ENCODE measurements at regions of chr2 and their contacts with region 1.

Region 1: DNA sequence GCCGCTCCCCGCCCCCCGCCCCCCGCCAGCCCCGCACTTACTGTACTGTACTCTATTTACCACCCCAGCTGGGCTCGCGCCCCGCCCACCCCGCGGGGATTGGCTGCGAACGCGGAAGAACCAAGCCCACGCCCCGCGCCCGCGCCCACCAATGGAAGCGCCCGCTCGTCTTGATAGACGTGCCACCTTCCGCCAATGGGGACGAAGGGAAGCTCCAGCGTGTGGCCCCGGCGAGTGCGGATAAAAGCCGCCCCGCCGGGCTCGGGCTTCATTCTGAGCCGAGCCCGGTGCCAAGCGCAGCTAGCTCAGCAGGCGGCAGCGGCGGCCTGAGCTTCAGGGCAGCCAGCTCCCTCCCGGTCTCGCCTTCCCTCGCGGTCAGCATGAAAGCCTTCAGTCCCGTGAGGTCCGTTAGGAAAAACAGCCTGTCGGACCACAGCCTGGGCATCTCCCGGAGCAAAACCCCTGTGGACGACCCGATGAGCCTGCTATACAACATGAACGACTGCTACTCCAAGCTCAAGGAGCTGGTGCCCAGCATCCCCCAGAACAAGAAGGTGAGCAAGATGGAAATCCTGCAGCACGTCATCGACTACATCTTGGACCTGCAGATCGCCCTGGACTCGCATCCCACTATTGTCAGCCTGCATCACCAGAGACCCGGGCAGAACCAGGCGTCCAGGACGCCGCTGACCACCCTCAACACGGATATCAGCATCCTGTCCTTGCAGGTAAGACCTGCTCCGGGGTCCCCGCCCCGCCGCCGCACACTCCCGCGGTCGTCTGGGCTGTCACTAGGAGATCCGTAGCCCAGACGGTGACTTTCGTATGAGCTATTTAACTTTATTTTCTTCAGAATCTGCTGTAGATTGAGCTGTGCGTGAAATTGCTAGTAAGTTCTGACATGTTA is at the start of gene ID2:
- DNase-seq: peak; percentile 88
- ATAC-seq: peak; percentile 64
- H3K4me3 ChIP-seq: peak within 1 kb of the TSS; percentile 80
- H3K27ac ChIP-seq: peak within 1 kb of the TSS; percentile 71
- H3K4me1 ChIP-seq: peaks cover 23% of the 10 kb centered on the region
- H3K27me3 ChIP-seq: peaks cover 0 to 8% of the 10 kb centered on the region in 2 experiments; a peak in 1 of 4 replicates
- CTCF ChIP-seq: no peak
- EP300 ChIP-seq: no peak
- POLR2A ChIP-seq: peak; percentile 99
- RAD21 ChIP-seq: no peak
- polyA plus RNA-seq, gene ID2: 77.3 to 82.5 TPM

Region 2: GRCh38 chr2:7427293-7428060 is 1254.6 kb before region 1 on chr2:
- CTCF ChIA-PET with region 1: interaction called, 7 read pairs
- POLR2A ChIA-PET with region 1: interaction called, 3 read pairs
- RAD21 ChIA-PET with region 1: interaction called, 24 read pairs
- SMC1A ChIA-PET with region 1: interaction called, 12 read pairs
- in situ Hi-C with region 1: loop called (anchors 5 kb)
- intact Hi-C with region 1: loop called (anchors 2 kb)
- DNase-seq: peak; percentile 66
- ATAC-seq: no peak; the same call in 2 of the 3 replicates
- H3K4me3 ChIP-seq: no peak overlapping the region
- H3K27ac ChIP-seq: no peak overlapping the region
- H3K4me1 ChIP-seq: peaks cover 7% of the 10 kb centered on the region; the same call in 1 of the 2 replicates
- H3K27me3 ChIP-seq: peaks cover 0 to 25% of the 10 kb centered on the region in 2 experiments; a peak in 3 of 4 replicates
- CTCF ChIP-seq: peak; percentile 44 to 70 (median 70); a peak in 5 of 6 replicates
- EP300 ChIP-seq: no peak
- POLR2A ChIP-seq: no peak
- RAD21 ChIP-seq: peak; percentile 88

Region 3: DNA sequence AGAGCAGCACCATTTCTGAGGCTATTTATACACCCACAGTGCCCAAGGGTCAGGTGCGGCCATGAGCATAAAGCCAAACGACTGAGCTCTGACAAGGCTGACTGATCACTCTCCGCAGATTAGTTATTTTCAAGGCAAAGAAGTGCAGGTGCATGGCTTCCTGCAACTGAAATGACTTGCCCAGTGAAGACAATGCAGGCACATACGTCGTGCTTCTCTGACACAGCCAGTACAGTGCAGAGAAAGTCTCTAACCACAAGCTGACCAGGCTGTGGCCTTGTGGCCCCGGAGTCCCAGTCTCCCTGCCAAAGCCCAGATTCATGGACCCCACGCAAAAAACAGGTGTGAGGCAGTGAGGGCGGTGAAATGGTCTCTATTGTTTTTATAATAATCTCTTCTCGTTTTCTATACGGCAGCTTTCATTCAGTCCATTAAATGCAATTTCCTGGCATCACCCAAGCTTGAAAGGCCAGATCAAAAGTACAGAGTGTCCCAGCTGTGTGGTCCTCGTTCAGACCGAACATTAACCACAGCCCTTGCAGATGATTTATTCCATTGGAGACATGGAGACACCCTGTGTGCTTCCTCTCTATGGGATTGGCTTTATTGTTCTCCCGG is 447.2 kb before region 1 on chr2:
- CTCF ChIA-PET with region 1: no interaction called
- POLR2A ChIA-PET with region 1: no interaction called
- RAD21 ChIA-PET with region 1: interaction called, 3 read pairs
- SMC1A ChIA-PET with region 1: interaction called, 3 read pairs
- in situ Hi-C with region 1: loop called (anchors 10 kb)
- intact Hi-C with region 1: loop called (anchors 10 kb)
- DNase-seq: peak; percentile 90
- ATAC-seq: peak; percentile 88
- H3K4me3 ChIP-seq: peak overlapping the region; percentile 26; the same call in 1 of the 2 replicates
- H3K27ac ChIP-seq: peak overlapping the region; percentile 41
- H3K4me1 ChIP-seq: peaks cover 39% of the 10 kb centered on the region
- H3K27me3 ChIP-seq: no peaks in the 10 kb centered on the region
- CTCF ChIP-seq: no peak
- EP300 ChIP-seq: peak; percentile 78 to 84
- POLR2A ChIP-seq: no peak
- RAD21 ChIP-seq: no peak

Region 4: DNA sequence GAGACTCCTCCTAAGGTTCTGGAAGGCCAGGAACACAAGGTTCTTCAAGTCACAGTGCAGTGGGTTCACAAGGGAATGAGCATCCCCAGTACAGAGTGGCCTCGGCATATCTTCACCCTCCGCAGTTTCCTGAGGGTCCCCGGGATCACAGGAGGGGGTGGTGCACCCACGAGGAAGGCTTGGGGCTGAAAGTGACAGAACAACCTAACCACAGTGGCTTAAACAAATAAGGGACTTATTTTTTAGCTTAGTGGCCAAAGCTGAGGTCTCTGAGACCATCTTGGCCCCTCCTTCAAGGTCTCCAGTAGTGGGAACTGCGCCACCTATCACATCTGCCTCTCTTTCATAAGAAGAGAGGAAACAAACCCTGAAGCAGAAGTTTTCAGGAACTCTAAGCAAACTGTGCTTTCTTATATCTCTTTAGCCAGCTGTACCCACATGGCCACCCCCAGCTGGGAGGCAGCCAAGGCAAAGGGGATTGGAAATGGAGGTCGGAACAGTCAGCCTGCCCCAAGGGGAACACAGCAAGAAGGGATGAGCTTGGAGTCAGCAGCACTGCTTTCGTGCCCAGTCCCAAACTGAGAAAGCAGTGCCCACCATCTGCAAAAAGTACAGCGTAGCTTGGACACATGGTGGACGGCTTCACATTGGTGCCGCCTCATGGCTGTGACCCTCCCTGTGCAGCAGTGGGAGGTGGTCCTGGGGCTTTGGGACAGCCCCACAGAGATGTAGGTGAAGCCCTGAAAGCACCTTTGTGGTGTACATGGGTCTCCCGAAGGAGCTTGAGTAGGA is 260.2 kb before region 1 on chr2:
- CTCF ChIA-PET with region 1: interaction called, 3 read pairs
- POLR2A ChIA-PET with region 1: interaction called, 6 read pairs
- RAD21 ChIA-PET with region 1: interaction called, 18 read pairs
- SMC1A ChIA-PET with region 1: interaction called, 5 read pairs
- in situ Hi-C with region 1: loop called (anchors 10 kb)
- intact Hi-C with region 1: loop called (anchors 2 kb)
- DNase-seq: peak; percentile 71
- ATAC-seq: peak; percentile 85
- H3K4me3 ChIP-seq: no peak overlapping the region
- H3K27ac ChIP-seq: peak overlapping the region; percentile 46
- H3K4me1 ChIP-seq: peaks cover 16% of the 10 kb centered on the region
- H3K27me3 ChIP-seq: no peaks in the 10 kb centered on the region
- CTCF ChIP-seq: peak; percentile 26 to 44 (median 29); a peak in 5 of 6 replicates
- EP300 ChIP-seq: peak; percentile 56 to 80; a peak in 3 of 4 replicates
- POLR2A ChIP-seq: no peak
- RAD21 ChIP-seq: peak; percentile 49

Region 5: GRCh38 chr2:8452979-8453903 is 228.8 kb before region 1 on chr2:
- CTCF ChIA-PET with region 1: no interaction called
- POLR2A ChIA-PET with region 1: no interaction called
- RAD21 ChIA-PET with region 1: no interaction called
- SMC1A ChIA-PET with region 1: no interaction called
- in situ Hi-C with region 1: no loop called
- intact Hi-C with region 1: no loop called
- DNase-seq: no peak
- ATAC-seq: no peak
- H3K4me3 ChIP-seq: no peak overlapping the region
- H3K27ac ChIP-seq: no peak overlapping the region
- H3K4me1 ChIP-seq: peaks cover 6% of the 10 kb centered on the region
- H3K27me3 ChIP-seq: peaks cover 0 to 2% of the 10 kb centered on the region in 2 experiments; a peak in 1 of 4 replicates
- CTCF ChIP-seq: no peak
- EP300 ChIP-seq: no peak
- POLR2A ChIP-seq: no peak
- RAD21 ChIP-seq: no peak

Region 6: DNA sequence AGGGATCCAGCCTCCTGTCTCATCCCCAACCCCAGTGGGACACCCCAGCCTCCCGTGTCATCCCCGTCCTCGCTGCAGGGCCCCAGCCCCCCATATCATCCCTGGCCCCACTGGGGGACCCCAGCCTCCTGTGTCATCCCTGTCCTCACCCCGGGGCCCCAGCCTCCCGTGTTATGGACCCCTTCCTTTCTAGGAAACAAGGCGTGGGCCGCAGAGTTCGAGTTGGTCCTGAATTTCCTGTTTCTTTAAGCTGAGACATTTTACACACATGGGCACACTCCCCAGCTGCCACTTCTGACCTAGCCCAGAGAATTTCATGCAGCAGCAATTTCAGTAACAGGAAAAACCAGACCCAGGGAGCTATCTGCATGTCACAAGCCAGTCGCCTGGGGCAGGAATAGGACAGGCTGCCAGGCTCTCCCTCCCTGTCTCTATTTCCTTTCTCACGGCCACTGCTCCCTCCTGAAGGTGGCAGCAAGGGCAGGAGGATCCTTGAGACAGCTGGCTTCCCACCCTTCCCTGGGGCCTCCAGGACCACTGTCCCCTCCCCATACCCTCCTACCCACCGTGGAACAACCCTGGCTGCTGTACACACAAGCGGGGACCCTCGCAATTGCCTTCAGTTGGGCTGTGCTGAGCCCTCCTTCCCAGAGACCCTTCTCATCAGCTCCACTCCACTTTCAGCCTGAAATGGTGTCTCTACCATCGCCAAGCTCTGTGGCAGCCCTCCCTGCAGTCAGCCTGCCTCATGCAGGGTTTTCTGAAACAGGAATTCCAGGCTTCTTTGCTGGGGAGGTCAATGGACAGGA is 142.1 kb before region 1 on chr2:
- CTCF ChIA-PET with region 1: interaction called, 22 read pairs
- POLR2A ChIA-PET with region 1: interaction called, 42 read pairs
- RAD21 ChIA-PET with region 1: interaction called, 103 read pairs
- SMC1A ChIA-PET with region 1: interaction called, 15 read pairs
- in situ Hi-C with region 1: no loop called
- intact Hi-C with region 1: loop called (anchors 1 kb)
- DNase-seq: no peak
- ATAC-seq: no peak
- H3K4me3 ChIP-seq: no peak overlapping the region
- H3K27ac ChIP-seq: no peak overlapping the region
- H3K4me1 ChIP-seq: peaks cover 58% of the 10 kb centered on the region
- H3K27me3 ChIP-seq: no peaks in the 10 kb centered on the region
- CTCF ChIP-seq: no peak
- EP300 ChIP-seq: no peak
- POLR2A ChIP-seq: no peak
- RAD21 ChIP-seq: no peak

Region 7: DNA sequence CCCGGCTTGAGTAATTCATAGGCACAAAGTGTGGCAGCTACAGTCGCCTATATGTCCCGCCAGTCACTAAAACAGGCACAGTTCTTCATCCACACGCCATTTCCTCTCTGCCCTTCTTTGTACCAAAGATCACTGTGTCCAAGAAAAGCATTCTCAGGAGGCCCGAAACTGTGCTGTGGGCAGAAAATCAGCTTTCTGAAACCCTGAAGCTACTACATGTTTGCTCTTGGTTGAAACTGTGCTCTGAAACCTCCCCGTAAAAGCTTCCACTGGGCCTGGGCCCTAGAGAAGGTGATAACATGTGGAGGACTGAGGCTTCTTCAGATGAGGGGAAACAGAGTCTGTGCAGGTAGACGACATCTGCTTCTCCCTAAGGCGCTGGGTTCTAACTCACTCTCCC is 75.8 kb before region 1 on chr2:
- CTCF ChIA-PET with region 1: interaction called, 5 read pairs
- POLR2A ChIA-PET with region 1: interaction called, 25 read pairs
- RAD21 ChIA-PET with region 1: interaction called, 16 read pairs
- SMC1A ChIA-PET with region 1: interaction called, 9 read pairs
- in situ Hi-C with region 1: no loop called
- intact Hi-C with region 1: loop called (anchors 1 kb)
- DNase-seq: peak; percentile 82
- ATAC-seq: peak; percentile 90
- H3K4me3 ChIP-seq: no peak overlapping the region
- H3K27ac ChIP-seq: peak overlapping the region; percentile 23
- H3K4me1 ChIP-seq: peaks cover 30% of the 10 kb centered on the region
- H3K27me3 ChIP-seq: no peaks in the 10 kb centered on the region
- CTCF ChIP-seq: no peak
- EP300 ChIP-seq: peak; percentile 38 to 40; a peak in 2 of 4 replicates
- POLR2A ChIP-seq: no peak
- RAD21 ChIP-seq: no peak

Region 8: GRCh38 chr2:8767324-8767723 is 85.3 kb after region 1 on chr2:
- CTCF ChIA-PET with region 1: no interaction called
- POLR2A ChIA-PET with region 1: no interaction called
- RAD21 ChIA-PET with region 1: no interaction called
- SMC1A ChIA-PET with region 1: no interaction called
- in situ Hi-C with region 1: no loop called
- intact Hi-C with region 1: no loop called
- DNase-seq: no peak
- ATAC-seq: no peak
- H3K4me3 ChIP-seq: no peak overlapping the region
- H3K27ac ChIP-seq: no peak overlapping the region
- H3K4me1 ChIP-seq: no peaks in the 10 kb centered on the region
- H3K27me3 ChIP-seq: no peaks in the 10 kb centered on the region
- CTCF ChIP-seq: no peak
- EP300 ChIP-seq: no peak
- POLR2A ChIP-seq: no peak
- RAD21 ChIP-seq: no peak